ENCODE measurements at regions of chrX and their contacts with region 1.

Region 1: GRCh38 chrX:56113785-56114436 is 118.2 kb upstream of the KLF8 start:
- DNase-seq: peak; percentile 44 to 68
- H3K4me3 ChIP-seq: no peak overlapping the region
- H3K4me3 Mint-ChIP-seq: no peak overlapping the region
- H3K27ac Mint-ChIP-seq: no peak overlapping the region
- H3K4me1 ChIP-seq: no peaks in the 10 kb centered on the region; the same call in 1 of the 2 replicates
- H3K4me1 Mint-ChIP-seq: no peaks in the 10 kb centered on the region
- H3K27me3 ChIP-seq: no peaks in the 10 kb centered on the region
- H3K27me3 Mint-ChIP-seq: no peaks in the 10 kb centered on the region
- CTCF ChIP-seq: no peak

Region 2: GRCh38 chrX:55816023-55816422 is 297.9 kb before region 1 on chrX:
- CTCF ChIA-PET with region 1: no interaction called
- POLR2A ChIA-PET with region 1: no interaction called
- intact Hi-C with region 1: no loop called
- DNase-seq: no peak
- H3K4me3 ChIP-seq: no peak overlapping the region
- H3K4me3 Mint-ChIP-seq: no peak overlapping the region
- H3K27ac Mint-ChIP-seq: no peak overlapping the region
- H3K4me1 ChIP-seq: no peaks in the 10 kb centered on the region
- H3K4me1 Mint-ChIP-seq: no peaks in the 10 kb centered on the region
- H3K27me3 ChIP-seq: no peaks in the 10 kb centered on the region
- H3K27me3 Mint-ChIP-seq: no peaks in the 10 kb centered on the region
- CTCF ChIP-seq: no peak

Region 3: GRCh38 chrX:56029691-56030090 is 84.2 kb before region 1 on chrX:
- CTCF ChIA-PET with region 1: no interaction called
- POLR2A ChIA-PET with region 1: no interaction called
- intact Hi-C with region 1: loop called (anchors 10 kb)
- DNase-seq: peak in 1 of 2 experiments; percentile 1
- H3K4me3 ChIP-seq: no peak overlapping the region
- H3K4me3 Mint-ChIP-seq: no peak overlapping the region
- H3K27ac Mint-ChIP-seq: peak overlapping the region; percentile 67
- H3K4me1 ChIP-seq: peaks cover 20% of the 10 kb centered on the region
- H3K4me1 Mint-ChIP-seq: peaks cover 7% of the 10 kb centered on the region
- H3K27me3 ChIP-seq: no peaks in the 10 kb centered on the region
- H3K27me3 Mint-ChIP-seq: no peaks in the 10 kb centered on the region
- CTCF ChIP-seq: no peak

Region 4: GRCh38 chrX:56066016-56066415 is 47.9 kb before region 1 on chrX:
- CTCF ChIA-PET with region 1: no interaction called
- POLR2A ChIA-PET with region 1: no interaction called
- intact Hi-C with region 1: no loop called
- DNase-seq: no peak
- H3K4me3 ChIP-seq: no peak overlapping the region
- H3K4me3 Mint-ChIP-seq: no peak overlapping the region
- H3K27ac Mint-ChIP-seq: no peak overlapping the region
- H3K4me1 ChIP-seq: no peaks in the 10 kb centered on the region
- H3K4me1 Mint-ChIP-seq: no peaks in the 10 kb centered on the region
- H3K27me3 ChIP-seq: no peaks in the 10 kb centered on the region
- H3K27me3 Mint-ChIP-seq: no peaks in the 10 kb centered on the region
- CTCF ChIP-seq: no peak